ENCODE measurements at regions of chr2 and their contacts with region 1.

Region 1: DNA sequence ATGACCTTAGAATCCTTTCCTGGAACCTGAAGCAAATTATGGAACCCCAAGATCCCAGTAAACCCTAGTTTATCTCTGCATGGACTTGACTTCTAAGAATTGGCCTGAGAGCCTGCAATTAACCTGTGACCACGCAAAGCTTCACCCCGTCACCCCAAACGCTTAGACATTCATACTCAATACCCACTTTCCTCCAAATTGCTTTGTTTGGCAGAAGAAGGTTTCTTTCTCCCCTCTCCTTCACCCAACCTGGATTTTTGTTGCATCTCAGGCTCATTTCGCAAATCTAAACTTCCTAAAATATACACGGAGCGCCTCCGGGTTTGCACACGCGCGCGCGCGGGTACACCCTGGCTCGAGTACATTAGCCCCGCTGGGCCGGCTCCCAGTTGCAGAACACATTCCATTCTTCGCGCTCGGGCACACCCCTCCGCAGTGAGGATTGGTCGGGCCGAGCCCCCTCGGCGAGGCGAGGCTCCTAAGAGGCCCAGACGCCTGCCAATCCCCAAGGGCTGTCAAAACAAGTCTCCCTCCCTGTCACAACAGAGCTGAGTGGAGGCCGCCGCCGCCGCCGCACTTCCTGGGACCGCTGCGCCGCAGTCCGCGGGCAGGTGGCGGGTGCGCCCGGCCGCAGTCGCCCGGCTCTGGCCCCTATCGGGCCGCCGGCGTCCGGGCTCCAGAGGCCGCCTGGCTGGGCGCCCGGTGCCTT is at the start of gene PLCL1:
- DNase-seq: peak; percentile 97
- H3K4me3 Mint-ChIP-seq: peak within 1 kb of the TSS; percentile 92
- H3K27ac Mint-ChIP-seq: peak within 1 kb of the TSS; percentile 45
- H3K4me1 Mint-ChIP-seq: peaks cover 27% of the 10 kb centered on the region
- H3K27me3 Mint-ChIP-seq: peaks cover 40% of the 10 kb centered on the region
- total RNA-seq, gene PLCL1: 0.45 and 0.63 TPM in 2 replicates

Region 2: DNA sequence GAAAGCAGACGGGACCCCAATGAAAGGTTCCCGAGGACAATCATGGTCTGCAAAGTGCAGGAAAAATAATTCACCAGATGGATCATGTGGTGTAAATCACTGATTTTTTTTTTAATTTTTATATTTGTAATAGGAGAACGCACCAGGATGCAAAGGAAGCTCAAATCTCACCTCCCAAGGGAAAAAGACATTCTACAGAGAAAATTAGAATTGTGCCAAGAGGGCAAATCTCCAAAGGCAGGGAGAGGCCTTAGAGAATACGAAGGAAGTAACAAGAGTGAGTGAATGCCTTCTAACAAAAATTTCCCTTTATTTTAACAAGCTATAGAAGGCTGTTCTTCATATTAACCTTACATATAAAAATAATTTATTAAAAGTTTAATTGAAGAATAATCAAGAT is 584.6 kb before region 1 on chr2:
- intact Hi-C with region 1: no loop called
- DNase-seq: no peak
- H3K4me3 Mint-ChIP-seq: no peak overlapping the region
- H3K27ac Mint-ChIP-seq: no peak overlapping the region
- H3K4me1 Mint-ChIP-seq: peaks cover 58% of the 10 kb centered on the region
- H3K27me3 Mint-ChIP-seq: no peaks in the 10 kb centered on the region

Region 3: GRCh38 chr2:197760293-197760657 is 43.9 kb before region 1 on chr2:
- intact Hi-C with region 1: no loop called
- DNase-seq: no peak
- H3K4me3 Mint-ChIP-seq: no peak overlapping the region
- H3K27ac Mint-ChIP-seq: no peak overlapping the region
- H3K4me1 Mint-ChIP-seq: no peaks in the 10 kb centered on the region
- H3K27me3 Mint-ChIP-seq: peaks cover 20% of the 10 kb centered on the region

Region 4: GRCh38 chr2:197838036-197838435 is 33.8 kb after region 1 on chr2:
- intact Hi-C with region 1: loop called (anchors 2 kb)
- DNase-seq: peak; percentile 79
- H3K4me3 Mint-ChIP-seq: peak overlapping the region; percentile 64
- H3K27ac Mint-ChIP-seq: peak overlapping the region; percentile 70
- H3K4me1 Mint-ChIP-seq: peaks cover 26% of the 10 kb centered on the region
- H3K27me3 Mint-ChIP-seq: peaks cover 7% of the 10 kb centered on the region

Region 5: GRCh38 chr2:197952540-197953202 is 148.5 kb after region 1 on chr2:
- intact Hi-C with region 1: loop called (anchors 5 kb)
- DNase-seq: no peak
- H3K4me3 Mint-ChIP-seq: no peak overlapping the region
- H3K27ac Mint-ChIP-seq: no peak overlapping the region
- H3K4me1 Mint-ChIP-seq: peaks cover 8% of the 10 kb centered on the region
- H3K27me3 Mint-ChIP-seq: peaks cover 5% of the 10 kb centered on the region

Region 6: GRCh38 chr2:198042189-198042588 is 238.0 kb after region 1 on chr2:
- intact Hi-C with region 1: loop called (anchors 2 kb)
- DNase-seq: no peak
- H3K4me3 Mint-ChIP-seq: no peak overlapping the region
- H3K27ac Mint-ChIP-seq: no peak overlapping the region
- H3K4me1 Mint-ChIP-seq: peaks cover 6% of the 10 kb centered on the region
- H3K27me3 Mint-ChIP-seq: no peaks in the 10 kb centered on the region

Region 7: GRCh38 chr2:198127627-198128026 is 323.4 kb after region 1 on chr2:
- intact Hi-C with region 1: loop called (anchors 1 kb)
- DNase-seq: peak; percentile 80
- H3K4me3 Mint-ChIP-seq: no peak overlapping the region
- H3K27ac Mint-ChIP-seq: no peak overlapping the region
- H3K4me1 Mint-ChIP-seq: peaks cover 4% of the 10 kb centered on the region
- H3K27me3 Mint-ChIP-seq: peaks cover 2% of the 10 kb centered on the region

Measured in activated CD4-positive, alpha-beta T cell treated with anti-CD3 and anti-CD28 coated beads, Interleukin-2, amount 10 ng/mL, durations not matched to agents 24 days and 14 days (primary cell).